Activated naive CD4-positive, alpha-beta T cell treated with anti-CD3 and anti-CD28 coated beads for 36 hours (primary cell): ENCODE measurements at regions of chr4 and their contacts with region 1.

Region 1: DNA sequence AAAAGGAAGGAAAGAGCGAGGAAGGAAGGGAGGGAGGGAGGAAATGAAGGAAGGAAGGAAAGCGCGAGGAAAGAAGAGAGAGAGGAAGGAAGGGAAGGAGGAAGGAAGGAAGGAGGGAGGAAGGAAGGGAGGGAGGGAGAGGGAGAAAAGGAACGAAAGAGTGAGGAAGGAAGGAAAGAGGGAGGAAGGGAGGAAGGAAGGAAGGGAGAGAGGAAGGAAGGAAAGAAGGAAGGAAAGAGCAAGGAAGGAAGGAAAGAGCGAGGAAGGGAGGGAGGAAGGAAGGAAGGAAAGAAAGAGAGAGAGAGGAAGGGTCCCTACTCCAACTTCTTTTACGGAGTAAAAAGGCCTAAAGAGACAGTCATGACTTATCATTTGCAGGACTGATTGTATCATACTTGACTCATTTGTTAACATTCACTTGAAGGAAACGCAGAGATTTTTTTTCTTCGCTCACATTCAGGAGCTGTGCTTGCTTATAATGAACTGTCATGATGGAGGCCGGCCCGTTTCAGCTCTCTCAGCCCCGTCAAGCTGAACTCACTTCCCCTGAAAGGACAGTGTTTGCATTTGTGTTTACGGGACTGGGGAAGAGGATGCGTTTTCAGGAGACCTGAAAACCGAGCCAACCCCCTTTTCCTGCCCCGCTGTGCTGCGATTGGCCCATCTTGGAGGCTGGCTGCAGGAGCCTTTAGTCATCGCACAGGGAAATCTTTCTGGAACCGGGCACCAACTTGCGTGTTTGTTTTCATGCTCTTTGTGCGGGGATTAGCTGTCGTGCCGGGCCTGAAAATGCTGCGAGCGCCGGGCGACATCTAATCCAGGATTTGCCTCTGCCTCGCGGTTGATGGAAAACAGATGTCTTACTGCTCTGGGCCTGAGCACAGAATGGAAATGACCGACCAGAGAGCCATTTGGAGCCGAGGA is 17.8 kb downstream of the TRIM2 start:
- DNase-seq: peak; percentile 62
- H3K4me3 Mint-ChIP-seq: peak overlapping the region; percentile 79
- H3K27ac Mint-ChIP-seq: peak overlapping the region; percentile 21
- H3K4me1 Mint-ChIP-seq: peaks cover 42% of the 10 kb centered on the region
- H3K27me3 Mint-ChIP-seq: peaks cover 7% of the 10 kb centered on the region

Region 2: GRCh38 chr4:152655272-152656129 is 566.5 kb before region 1 on chr4:
- CTCF ChIA-PET with region 1: no interaction called
- intact Hi-C with region 1: no loop called
- DNase-seq: no peak
- H3K4me3 Mint-ChIP-seq: no peak overlapping the region
- H3K27ac Mint-ChIP-seq: no peak overlapping the region
- H3K4me1 Mint-ChIP-seq: peaks cover 6% of the 10 kb centered on the region
- H3K27me3 Mint-ChIP-seq: no peaks in the 10 kb centered on the region

Region 3: GRCh38 chr4:153159728-153160221 is 62.3 kb before region 1 on chr4:
- CTCF ChIA-PET with region 1: no interaction called
- intact Hi-C with region 1: loop called (anchors 1 kb)
- DNase-seq: no peak
- H3K4me3 Mint-ChIP-seq: no peak overlapping the region
- H3K27ac Mint-ChIP-seq: peak overlapping the region; percentile 90
- H3K4me1 Mint-ChIP-seq: peaks cover 54% of the 10 kb centered on the region
- H3K27me3 Mint-ChIP-seq: no peaks in the 10 kb centered on the region

Region 4: GRCh38 chr4:153232768-153233167 is 10.7 kb after region 1 on chr4:
- CTCF ChIA-PET with region 1: no interaction called
- intact Hi-C with region 1: loop called (anchors 1 kb)
- DNase-seq: peak; percentile 39
- H3K4me3 Mint-ChIP-seq: no peak overlapping the region
- H3K27ac Mint-ChIP-seq: no peak overlapping the region
- H3K4me1 Mint-ChIP-seq: peaks cover 36% of the 10 kb centered on the region
- H3K27me3 Mint-ChIP-seq: no peaks in the 10 kb centered on the region

Region 5: GRCh38 chr4:153426207-153426885 is 204.3 kb after region 1 on chr4:
- CTCF ChIA-PET with region 1: no interaction called
- intact Hi-C with region 1: loop called (anchors 10 kb)
- DNase-seq: no peak
- H3K4me3 Mint-ChIP-seq: no peak overlapping the region
- H3K27ac Mint-ChIP-seq: peak overlapping the region; percentile 63
- H3K4me1 Mint-ChIP-seq: peaks cover 65% of the 10 kb centered on the region
- H3K27me3 Mint-ChIP-seq: no peaks in the 10 kb centered on the region

Region 6: DNA sequence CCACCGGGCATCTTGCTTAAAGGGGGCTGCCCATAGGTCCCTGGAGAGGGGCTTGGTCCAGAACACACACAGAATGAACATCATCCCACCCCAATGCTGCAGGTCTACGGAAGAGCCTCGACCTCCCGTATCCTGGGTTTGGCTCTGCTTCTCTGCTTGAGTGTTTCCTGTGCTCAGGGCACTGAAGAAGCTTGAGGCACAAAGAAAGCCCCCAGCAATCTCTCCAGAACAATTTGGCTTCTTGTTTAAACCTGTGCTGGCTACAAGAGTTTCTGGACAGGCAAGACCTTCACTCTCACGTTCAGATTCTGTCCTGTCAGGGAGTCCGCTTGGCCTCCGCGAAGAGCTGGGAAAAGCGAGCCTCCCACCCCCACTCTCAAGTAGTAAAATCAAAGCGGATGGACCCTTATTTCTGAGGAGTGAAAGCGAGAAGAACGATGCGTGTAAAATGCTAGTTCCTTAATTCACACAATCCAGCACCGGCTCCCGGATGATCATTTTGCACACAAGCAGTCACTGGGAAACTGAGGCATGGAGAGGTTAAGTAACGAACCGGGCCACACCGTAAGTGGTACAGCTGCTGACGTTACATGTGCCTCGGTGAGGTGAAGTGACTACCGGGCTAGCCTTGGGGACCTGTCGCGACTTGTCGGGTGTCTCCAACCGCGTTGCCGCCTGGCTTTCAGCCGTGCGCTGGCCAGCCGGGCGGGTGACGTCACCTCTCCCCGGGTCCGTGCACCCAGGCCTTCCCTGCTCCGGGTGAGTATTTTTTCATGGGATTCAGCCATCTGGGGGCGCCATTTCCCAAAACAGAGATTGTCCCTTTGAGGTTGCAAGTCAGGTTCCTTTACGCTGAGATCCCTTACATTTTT is 569.9 kb after region 1 on chr4:
- CTCF ChIA-PET with region 1: no interaction called
- intact Hi-C with region 1: no loop called
- DNase-seq: peak; percentile 85
- H3K4me3 Mint-ChIP-seq: peak overlapping the region; percentile 67
- H3K27ac Mint-ChIP-seq: no peak overlapping the region
- H3K4me1 Mint-ChIP-seq: peaks cover 44% of the 10 kb centered on the region
- H3K27me3 Mint-ChIP-seq: peaks cover 79% of the 10 kb centered on the region